ENCODE measurements at regions of chr4 and their contacts with region 1.

Region 1: DNA sequence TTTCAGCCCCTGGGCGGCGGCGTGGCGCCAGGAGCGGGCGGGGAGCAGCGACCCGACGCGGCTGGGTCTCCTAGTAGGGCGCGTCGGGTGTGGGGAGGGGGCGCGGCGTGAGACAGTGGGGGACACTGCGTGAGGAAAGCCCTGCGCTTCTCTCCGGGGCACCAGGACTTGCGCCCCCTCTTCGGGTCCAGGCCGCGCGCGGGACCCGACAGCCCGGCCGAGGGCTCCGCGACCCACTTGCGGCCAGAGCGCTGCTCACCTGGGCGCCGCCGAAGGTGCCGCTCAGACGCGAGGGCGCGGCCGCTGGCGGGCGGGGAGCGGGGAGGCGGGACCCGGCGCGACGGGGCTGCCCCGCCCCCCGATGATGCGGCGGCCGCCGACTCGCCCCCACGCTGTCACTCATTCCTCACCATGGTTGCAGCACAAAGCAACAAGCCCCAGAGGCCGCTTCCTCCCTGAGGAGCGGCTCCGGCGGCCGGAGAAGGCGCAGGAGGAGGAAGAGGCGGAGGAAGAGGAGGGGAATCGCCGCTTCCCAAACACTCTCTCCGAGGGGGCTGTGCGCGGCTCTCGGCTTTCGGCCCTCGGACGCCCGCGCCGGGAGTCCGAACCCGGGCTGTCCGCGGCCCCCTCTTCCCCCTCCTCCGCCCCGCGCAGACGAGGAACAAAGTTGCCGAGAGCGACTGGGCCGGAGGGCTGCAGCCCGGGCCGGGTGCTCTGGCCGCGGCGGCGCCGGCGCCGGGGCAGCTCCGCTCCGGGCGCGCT is at the start of gene RAPGEF2:
- DNase-seq: peak; percentile 95
- ATAC-seq: peak; percentile 95 to 96 (median 96)
- H3K4me3 ChIP-seq: peak within 1 kb of the TSS; percentile 85 to 99 (median 97)
- H3K27ac ChIP-seq: peak within 1 kb of the TSS; percentile 88 to 98 (median 96)
- H3K4me1 ChIP-seq: peaks cover 0 to 38% (median 25%) of the 10 kb centered on the region in 12 donors
- H3K27me3 ChIP-seq: no peaks in the 10 kb centered on the region
- CTCF ChIP-seq: peak in 1 of 12 donors; percentile 9
- POLR2A ChIP-seq: peak; percentile 93 to 99
- total RNA-seq, gene RAPGEF2: 35.3 to 75.9 (median 56.9) TPM

Region 2: DNA sequence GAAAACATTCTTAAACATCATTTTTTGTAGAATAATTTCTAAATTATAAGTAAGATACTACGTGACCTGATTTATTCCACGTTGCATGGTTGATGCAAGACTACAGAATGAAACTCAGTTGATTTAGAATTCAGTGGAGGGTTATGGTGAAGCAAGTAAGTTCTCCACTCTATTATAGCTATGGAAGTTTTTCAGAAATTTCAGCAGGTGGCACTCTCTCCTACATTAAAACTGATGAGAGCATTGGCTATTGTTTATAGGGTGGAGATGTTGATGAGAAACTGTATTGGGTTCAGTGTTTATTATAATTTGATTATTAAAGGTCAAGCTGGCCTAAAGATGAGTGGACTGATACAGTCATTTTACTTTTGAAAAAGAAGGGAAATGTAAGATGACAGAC is 246.0 kb before region 1 on chr4:
- intact Hi-C with region 1: loop called in 3 of 10 experiments (anchors 5 to 10 kb)
- DNase-seq: no peak
- ATAC-seq: peak; percentile 18 to 68 (median 60)
- H3K4me3 ChIP-seq: no peak overlapping the region
- H3K27ac ChIP-seq: no peak overlapping the region
- H3K4me1 ChIP-seq: peaks cover 0 to 16% (median 0%) of the 10 kb centered on the region in 12 donors
- H3K27me3 ChIP-seq: no peaks in the 10 kb centered on the region
- CTCF ChIP-seq: peak; percentile 39 to 71 (median 59)
- POLR2A ChIP-seq: no peak

Region 3: GRCh38 chr4:158873795-158874401 is 228.9 kb before region 1 on chr4:
- intact Hi-C with region 1: loop called in 3 of 10 experiments (anchors 5 to 10 kb)
- DNase-seq: no peak
- ATAC-seq: peak in 1 of 4 donors; percentile 17
- H3K4me3 ChIP-seq: no peak overlapping the region
- H3K27ac ChIP-seq: no peak overlapping the region
- H3K4me1 ChIP-seq: peaks cover 0 to 50% (median 12%) of the 10 kb centered on the region in 12 donors
- H3K27me3 ChIP-seq: no peaks in the 10 kb centered on the region
- CTCF ChIP-seq: no peak
- POLR2A ChIP-seq: no peak

Region 4: GRCh38 chr4:159159611-159160010 is 56.8 kb after region 1 on chr4:
- intact Hi-C with region 1: loop called in 1 of 10 experiments (anchors 5 kb)
- DNase-seq: no peak
- ATAC-seq: no peak
- H3K4me3 ChIP-seq: no peak overlapping the region
- H3K27ac ChIP-seq: peak overlapping the region in 1 of 12 donors; percentile 18
- H3K4me1 ChIP-seq: peaks cover 6 to 83% (median 53%) of the 10 kb centered on the region in 12 donors
- H3K27me3 ChIP-seq: no peaks in the 10 kb centered on the region
- CTCF ChIP-seq: no peak
- POLR2A ChIP-seq: no peak

Region 5: DNA sequence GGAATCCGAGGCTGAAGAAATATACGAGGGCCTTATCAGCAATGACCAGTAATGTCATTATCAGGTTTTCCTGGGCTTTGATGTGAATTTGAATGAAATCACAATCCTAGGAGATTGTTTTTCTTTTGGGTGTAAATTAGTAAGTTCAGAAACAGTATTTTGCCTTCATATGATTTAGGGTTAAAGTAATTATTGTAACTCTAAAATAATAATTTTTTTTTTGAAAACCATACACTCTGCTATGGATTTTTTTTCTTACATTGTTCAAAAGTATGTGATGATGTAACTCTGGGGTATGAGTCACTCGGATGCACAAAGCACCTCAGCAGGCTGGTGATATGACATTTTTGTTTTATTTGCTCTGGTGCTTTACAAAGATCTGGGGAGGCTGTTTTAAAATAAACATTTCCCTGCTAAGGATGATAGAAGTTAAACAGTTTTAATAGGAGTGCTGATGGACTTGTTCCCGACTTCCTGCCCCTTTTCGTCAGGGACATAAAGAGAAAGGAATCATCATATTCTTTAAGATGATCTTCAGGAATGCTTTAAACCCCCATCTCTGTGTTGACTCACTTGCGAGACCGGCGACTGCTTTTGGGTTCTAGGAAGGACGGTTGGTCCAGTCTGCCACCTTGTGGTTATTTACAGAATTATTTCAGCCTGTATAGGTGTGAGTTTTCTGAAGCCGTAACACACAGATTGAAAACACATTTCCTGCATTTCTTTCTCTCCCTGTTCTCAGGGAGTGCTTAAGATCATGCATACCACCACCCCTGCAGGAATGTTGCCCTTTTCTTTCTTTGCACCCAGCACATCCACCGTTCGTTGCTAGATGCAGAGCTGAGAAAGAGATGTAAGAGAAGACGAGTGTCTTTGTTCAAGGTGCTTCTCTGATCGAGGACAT is 72.5 kb after region 1 on chr4:
- intact Hi-C with region 1: loop called in 9 of 10 experiments (anchors 1 to 10 kb)
- DNase-seq: peak in 4 of 5 donors; percentile 58 to 74 (median 66)
- ATAC-seq: peak; percentile 69 to 90 (median 88)
- H3K4me3 ChIP-seq: peak overlapping the region in 7 of 12 donors; percentile 4 to 19 (median 16)
- H3K27ac ChIP-seq: peak overlapping the region in 11 of 12 donors; percentile 13 to 75 (median 50)
- H3K4me1 ChIP-seq: peaks cover 11 to 98% (median 85%) of the 10 kb centered on the region in 12 donors
- H3K27me3 ChIP-seq: no peaks in the 10 kb centered on the region
- CTCF ChIP-seq: peak; percentile 69 to 89 (median 84)
- POLR2A ChIP-seq: no peak

Measured in heart left ventricle (tissue), 16 donors.